T-cell (primary cell): ENCODE measurements at regions of chr10 and their contacts with region 1.

Region 1: DNA sequence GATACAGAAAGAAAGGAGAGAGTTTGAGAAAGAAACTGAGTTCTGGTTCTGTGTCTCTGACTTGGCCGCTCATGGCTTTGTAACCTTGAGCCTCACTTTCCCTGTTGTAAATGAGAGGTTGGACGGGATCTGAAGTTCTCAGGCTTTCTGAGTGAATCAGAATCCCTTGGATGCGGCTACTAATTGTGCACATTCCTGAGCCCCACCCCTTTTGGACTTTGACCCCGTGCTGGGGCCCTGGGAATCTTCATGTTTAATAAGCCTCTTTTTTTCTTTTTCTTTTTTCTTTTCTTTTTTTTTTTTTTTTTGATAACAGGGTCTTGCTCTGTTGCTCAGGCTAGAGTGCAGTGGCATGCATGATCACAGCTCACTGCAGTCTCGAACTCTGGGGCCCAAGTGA is 26.9 kb downstream of the SLC25A28 start:
- DNase-seq: no peak
- ATAC-seq: no peak
- H3K4me3 ChIP-seq: no peak overlapping the region
- H3K4me3 Mint-ChIP-seq: no peak overlapping the region
- H3K27ac ChIP-seq: no peak overlapping the region
- H3K27ac Mint-ChIP-seq: no peak overlapping the region
- H3K4me1 ChIP-seq: no peaks in the 10 kb centered on the region
- H3K4me1 Mint-ChIP-seq: no peaks in the 10 kb centered on the region
- H3K27me3 ChIP-seq: peaks cover 0 to 3% of the 10 kb centered on the region in 2 experiments
- H3K27me3 Mint-ChIP-seq: peaks cover 0 to 1% of the 10 kb centered on the region in 2 donors

Region 2: GRCh38 chr10:99620713-99621453 is 27.6 kb after region 1 on chr10:
- CTCF ChIA-PET with region 1: no interaction called
- POLR2A ChIA-PET with region 1: interaction called in 1 of 2 experiments, 10 read pairs
- DNase-seq: peak in 34 of 35 experiments; percentile 52 to 95 (median 71)
- ATAC-seq: peak; percentile 86 to 90 (median 86)
- H3K4me3 ChIP-seq: peak overlapping the region; percentile 78 to 82
- H3K4me3 Mint-ChIP-seq: peak overlapping the region; percentile 76 to 87 (median 87)
- H3K27ac ChIP-seq: peak overlapping the region; percentile 96
- H3K27ac Mint-ChIP-seq: peak overlapping the region; percentile 93 to 94
- H3K4me1 ChIP-seq: peaks cover 17 to 33% of the 10 kb centered on the region in 2 experiments
- H3K4me1 Mint-ChIP-seq: peaks cover 40 to 45% (median 44%) of the 10 kb centered on the region in 3 donors
- H3K27me3 ChIP-seq: no peaks in the 10 kb centered on the region
- H3K27me3 Mint-ChIP-seq: no peaks in the 10 kb centered on the region